ENCODE measurements at regions of chr3 and their contacts with region 1.

Region 1: DNA sequence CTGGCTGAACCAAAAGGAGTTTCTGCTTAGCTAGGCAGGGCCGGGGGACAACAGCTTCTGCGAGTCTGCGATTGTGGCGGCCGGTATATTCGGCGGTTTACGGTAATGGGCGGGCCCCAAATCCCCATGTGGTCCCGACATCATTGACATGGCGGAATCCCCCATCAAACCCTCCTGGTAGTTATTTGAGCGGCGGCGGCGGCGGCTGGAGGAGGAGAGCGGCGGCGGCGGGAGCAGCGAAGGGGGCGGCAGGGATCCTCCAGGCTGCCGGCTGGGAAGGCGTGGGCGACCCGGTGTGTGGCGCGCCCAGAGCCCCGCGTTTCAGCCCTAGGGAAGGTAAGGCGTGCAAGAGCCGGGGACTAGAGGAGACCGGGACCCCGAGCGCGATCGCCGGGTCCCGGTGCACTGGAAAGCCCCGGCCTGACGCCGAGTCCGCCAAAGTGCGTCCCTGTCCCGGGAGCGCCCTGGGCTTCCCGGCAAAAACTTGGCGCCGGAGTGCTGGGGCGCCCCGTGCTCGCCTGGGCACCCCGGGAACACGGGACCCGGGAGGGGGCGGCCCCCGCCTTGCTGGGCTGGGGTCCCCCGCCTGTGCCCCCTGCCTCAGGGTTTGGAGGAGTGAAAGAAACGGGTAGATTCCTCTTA is at the start of gene FNDC3B:
- DNase-seq: peak; percentile 86
- ATAC-seq: peak; percentile 71
- H3K4me3 ChIP-seq: peak within 1 kb of the TSS; percentile 74 to 94
- H3K27ac ChIP-seq: peak within 1 kb of the TSS; percentile 90
- H3K4me1 ChIP-seq: peaks cover 8 to 32% of the 10 kb centered on the region in 2 experiments
- H3K27me3 ChIP-seq: no peaks in the 10 kb centered on the region
- CTCF ChIP-seq: no peak
- POLR2A ChIP-seq: peak; percentile 60
- RAD21 ChIP-seq: no peak; the same call in none of the 2 replicates
- total RNA-seq, gene FNDC3B: 45.7 TPM

Region 2: GRCh38 chr3:171935261-171935974 is 104.1 kb before region 1 on chr3:
- CTCF ChIA-PET with region 1: interaction called, 3 read pairs
- POLR2A ChIA-PET with region 1: interaction called, 5 read pairs
- RAD21 ChIA-PET with region 1: no interaction called
- intact Hi-C with region 1: loop called (anchors 1 kb)
- DNase-seq: no peak
- ATAC-seq: no peak
- H3K4me3 ChIP-seq: no peak overlapping the region
- H3K27ac ChIP-seq: no peak overlapping the region
- H3K4me1 ChIP-seq: peaks cover 0 to 6% of the 10 kb centered on the region in 2 experiments; a peak in 1 of 4 replicates
- H3K27me3 ChIP-seq: no peaks in the 10 kb centered on the region
- CTCF ChIP-seq: no peak
- POLR2A ChIP-seq: no peak
- RAD21 ChIP-seq: no peak

Region 3: DNA sequence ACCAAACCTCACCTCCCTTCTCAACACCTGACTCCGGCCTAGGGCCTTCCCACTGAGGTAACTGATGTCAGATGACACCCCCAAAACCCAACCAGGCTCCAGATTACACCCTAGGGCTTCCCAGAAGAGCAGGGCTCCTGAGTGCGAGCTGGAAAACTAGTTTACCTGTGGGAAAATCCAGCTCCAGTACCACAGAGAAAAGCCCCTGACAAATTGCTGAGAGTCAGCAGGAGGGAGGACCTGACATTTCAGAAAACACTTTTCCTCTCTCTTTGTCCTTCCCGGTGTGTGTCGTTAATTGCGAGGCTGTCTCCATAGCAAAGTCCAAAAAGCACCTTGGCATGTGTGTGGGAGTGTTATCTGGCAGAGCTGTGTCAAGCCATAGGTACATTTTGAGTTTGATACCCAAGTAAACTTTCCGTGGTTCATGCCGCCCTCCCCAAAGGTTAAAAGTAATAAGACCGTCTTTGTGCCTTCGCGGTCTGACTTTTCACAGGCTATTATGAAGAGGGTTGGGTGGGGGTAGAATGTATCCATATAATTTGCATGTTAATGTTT is 79.9 kb before region 1 on chr3:
- CTCF ChIA-PET with region 1: no interaction called
- POLR2A ChIA-PET with region 1: interaction called, 3 read pairs
- RAD21 ChIA-PET with region 1: no interaction called
- intact Hi-C with region 1: loop called (anchors 5 kb)
- DNase-seq: no peak
- ATAC-seq: no peak
- H3K4me3 ChIP-seq: no peak overlapping the region
- H3K27ac ChIP-seq: no peak overlapping the region
- H3K4me1 ChIP-seq: peaks cover 9 to 22% of the 10 kb centered on the region in 2 experiments
- H3K27me3 ChIP-seq: no peaks in the 10 kb centered on the region
- CTCF ChIP-seq: no peak
- POLR2A ChIP-seq: no peak
- RAD21 ChIP-seq: no peak